ENCODE measurements at regions of chr10 and their contacts with region 1.

Region 1: DNA sequence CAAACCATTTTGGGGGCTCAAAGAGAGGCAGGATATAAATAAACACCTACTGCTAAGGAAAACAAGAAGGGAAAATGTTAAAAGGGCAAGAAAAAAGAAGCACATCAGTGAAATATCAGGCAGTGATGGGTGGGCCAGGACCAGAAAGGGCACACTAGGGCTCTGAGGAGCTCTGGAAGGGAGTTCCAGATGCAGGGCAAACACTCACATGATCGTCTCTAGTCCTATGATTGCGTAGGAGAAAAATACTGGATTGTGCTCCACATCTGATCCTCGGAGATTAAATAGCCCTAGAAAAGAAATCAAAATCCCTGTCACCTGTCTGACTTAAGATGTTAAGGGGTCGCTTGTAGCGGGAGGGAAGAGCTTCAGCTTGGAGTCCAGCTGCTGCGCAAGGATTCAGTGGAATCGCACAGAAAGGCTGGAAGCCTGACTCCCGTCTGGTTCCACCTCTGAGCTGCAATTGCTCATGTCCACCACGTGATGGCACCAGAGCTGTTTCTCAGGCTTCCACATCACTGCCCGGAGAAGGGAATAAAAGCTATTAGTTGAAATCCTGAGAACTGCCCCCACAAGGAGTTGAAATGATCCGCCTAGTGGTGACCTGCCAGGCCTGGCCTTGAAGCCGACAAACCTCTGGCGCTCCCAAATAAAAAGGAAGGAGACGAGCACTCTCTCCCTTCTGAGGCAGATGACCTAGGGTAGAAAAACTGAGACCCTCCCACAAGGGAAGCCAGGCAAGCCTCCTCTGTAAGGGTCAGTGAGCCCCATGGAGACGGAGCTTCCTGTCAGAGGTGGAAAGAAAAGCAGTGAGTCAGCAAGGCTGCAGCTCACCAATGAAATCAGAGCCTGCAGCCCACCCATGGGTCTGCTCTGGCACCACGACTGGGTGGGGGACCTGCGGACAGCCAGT is 39.2 kb downstream of the XPNPEP1 start:
- DNase-seq: no peak
- H3K4me3 ChIP-seq: no peak overlapping the region
- H3K27me3 ChIP-seq: no peaks in the 10 kb centered on the region
- CTCF ChIP-seq: peak; percentile 95

Region 2: GRCh38 chr10:109676703-109677102 is 207.4 kb before region 1 on chr10:
- CTCF ChIA-PET with region 1: no interaction called
- POLR2A ChIA-PET with region 1: no interaction called
- DNase-seq: no peak
- H3K4me3 ChIP-seq: no peak overlapping the region
- H3K27me3 ChIP-seq: no peaks in the 10 kb centered on the region
- CTCF ChIP-seq: no peak

Region 3: DNA sequence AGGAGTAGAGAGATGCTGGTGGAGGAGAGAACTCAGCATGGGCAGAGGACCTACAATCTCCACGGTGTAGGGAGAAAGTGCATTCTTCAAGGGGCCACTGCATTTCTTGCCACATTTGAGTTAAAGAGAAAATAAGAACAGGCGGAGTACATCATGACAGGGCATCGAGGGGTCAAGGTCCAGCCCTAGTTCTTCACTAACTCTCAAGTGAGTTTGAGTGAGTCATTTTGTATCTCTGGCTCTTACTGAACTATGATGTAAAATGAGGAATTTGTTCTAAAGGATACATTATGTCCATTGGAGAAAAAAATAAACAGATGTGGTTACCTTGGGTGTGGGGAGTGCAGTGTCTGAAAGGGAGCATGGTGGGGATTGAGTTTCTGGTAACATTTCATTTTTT is 143.7 kb before region 1 on chr10:
- CTCF ChIA-PET with region 1: no interaction called
- POLR2A ChIA-PET with region 1: no interaction called
- DNase-seq: no peak
- H3K4me3 ChIP-seq: no peak overlapping the region
- H3K27me3 ChIP-seq: no peaks in the 10 kb centered on the region
- CTCF ChIP-seq: no peak

Region 4: DNA sequence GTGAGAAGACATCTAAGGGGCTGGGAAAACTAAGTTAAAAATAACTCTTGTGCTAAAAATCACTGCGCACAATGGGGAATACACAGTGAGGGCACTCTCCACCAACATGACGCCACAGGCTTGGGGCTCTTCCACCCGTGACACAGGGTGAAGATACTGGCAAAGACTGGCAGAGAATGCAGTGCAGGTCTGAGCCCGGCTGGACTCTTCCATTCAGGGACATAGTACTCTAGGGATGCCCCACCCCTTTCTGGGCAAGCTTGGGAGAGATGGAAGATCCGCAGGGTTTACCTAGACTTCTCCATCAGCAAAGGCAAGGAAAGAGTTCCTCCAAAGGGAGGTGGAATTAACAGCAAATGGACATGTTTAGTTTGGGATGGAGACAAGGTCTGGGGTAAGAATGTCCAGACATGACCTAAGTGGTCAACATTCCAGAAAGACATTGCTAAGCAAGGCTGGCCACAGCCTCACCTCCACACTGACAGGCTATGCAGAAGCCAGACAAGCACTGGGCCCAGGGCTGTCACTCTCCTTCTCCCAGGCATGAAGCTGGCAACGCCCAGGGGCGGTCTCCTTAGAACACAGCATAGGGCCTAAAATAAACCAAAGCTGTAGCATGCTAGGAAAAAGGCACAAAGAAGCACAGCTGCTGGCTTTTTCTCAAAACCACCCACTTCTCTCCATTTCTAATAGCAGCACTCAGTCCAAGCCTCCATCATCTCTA is 11.1 kb after region 1 on chr10:
- CTCF ChIA-PET with region 1: interaction called, 14 read pairs
- POLR2A ChIA-PET with region 1: no interaction called
- DNase-seq: no peak
- H3K4me3 ChIP-seq: no peak overlapping the region
- H3K27me3 ChIP-seq: no peaks in the 10 kb centered on the region
- CTCF ChIP-seq: no peak

Region 5: DNA sequence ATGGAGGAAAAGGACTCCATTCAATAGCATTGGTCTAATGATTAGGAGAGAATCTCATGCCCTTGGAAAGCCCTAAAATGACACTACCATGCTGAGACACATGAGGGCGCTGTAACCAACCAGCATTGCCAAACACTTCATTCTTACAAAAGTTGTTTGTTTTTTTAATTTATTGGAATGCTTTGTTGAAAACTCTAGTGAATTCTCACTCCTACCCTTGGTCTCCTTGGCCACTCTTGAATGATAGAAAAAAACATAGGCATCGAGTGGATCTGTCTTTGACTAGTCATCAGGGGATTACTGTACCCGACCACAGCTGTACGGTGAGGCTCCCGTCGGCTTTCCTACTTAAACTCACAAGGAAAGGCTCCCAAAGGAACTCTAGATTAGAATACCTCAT is 94.4 kb after region 1 on chr10:
- CTCF ChIA-PET with region 1: interaction called, 13 read pairs
- POLR2A ChIA-PET with region 1: no interaction called
- DNase-seq: no peak
- H3K4me3 ChIP-seq: no peak overlapping the region
- H3K27me3 ChIP-seq: no peaks in the 10 kb centered on the region
- CTCF ChIP-seq: peak; percentile 77

Region 6: GRCh38 chr10:110016039-110016438 is 131.9 kb after region 1 on chr10:
- CTCF ChIA-PET with region 1: interaction called, 16 read pairs
- POLR2A ChIA-PET with region 1: no interaction called
- DNase-seq: no peak
- H3K4me3 ChIP-seq: no peak overlapping the region
- H3K27me3 ChIP-seq: no peaks in the 10 kb centered on the region
- CTCF ChIP-seq: no peak; the same call in 1 of the 2 replicates

Region 7: GRCh38 chr10:110137142-110137545 is 253.0 kb after region 1 on chr10:
- CTCF ChIA-PET with region 1: interaction called, 31 read pairs
- POLR2A ChIA-PET with region 1: no interaction called
- DNase-seq: peak; percentile 26
- H3K4me3 ChIP-seq: no peak overlapping the region
- H3K27me3 ChIP-seq: no peaks in the 10 kb centered on the region
- CTCF ChIP-seq: peak; percentile 62

Region 8: GRCh38 chr10:110279407-110279986 is 395.4 kb after region 1 on chr10:
- CTCF ChIA-PET with region 1: interaction called, 12 read pairs
- POLR2A ChIA-PET with region 1: no interaction called
- DNase-seq: no peak
- H3K4me3 ChIP-seq: no peak overlapping the region
- H3K27me3 ChIP-seq: no peaks in the 10 kb centered on the region
- CTCF ChIP-seq: peak; percentile 71